Heart right ventricle (tissue), 16 donors: ENCODE measurements at regions of chr17 and their contacts with region 1.

Region 1: GRCh38 chr17:50547035-50547735 is at the start of gene SPATA20:
- DNase-seq: peak; percentile 89 to 93
- ATAC-seq: peak; percentile 85 to 93 (median 88)
- H3K4me3 ChIP-seq: peak within 1 kb of the TSS; percentile 43 to 74 (median 66)
- H3K27ac ChIP-seq: peak within 1 kb of the TSS; percentile 6 to 94 (median 82)
- H3K4me1 ChIP-seq: peaks cover 0 to 37% (median 21%) of the 10 kb centered on the region in 9 donors
- H3K27me3 ChIP-seq: no peaks in the 10 kb centered on the region
- CTCF ChIP-seq: peak; percentile 95 to 100 (median 98)
- total RNA-seq, gene SPATA20: 18.5 to 80.6 (median 63.3) TPM

Region 2: GRCh38 chr17:50583641-50584040 is 36.5 kb after region 1 on chr17:
- intact Hi-C with region 1: no loop called
- DNase-seq: peak; percentile 50 to 51
- ATAC-seq: peak; percentile 53 to 84 (median 75)
- H3K4me3 ChIP-seq: peak overlapping the region in 3 of 10 donors; percentile 6 to 15 (median 12)
- H3K27ac ChIP-seq: peak overlapping the region in 8 of 10 donors; percentile 12 to 78 (median 66)
- H3K4me1 ChIP-seq: peaks cover 3 to 24% (median 16%) of the 10 kb centered on the region in 9 donors
- H3K27me3 ChIP-seq: peaks cover 0 to 3% (median 0%) of the 10 kb centered on the region in 7 donors
- CTCF ChIP-seq: no peak

Region 3: GRCh38 chr17:50626037-50626574 is 78.9 kb after region 1 on chr17:
- intact Hi-C with region 1: loop called (anchors 1 to 5 kb)
- DNase-seq: peak; percentile 76
- ATAC-seq: peak; percentile 73 to 88 (median 84)
- H3K4me3 ChIP-seq: no peak overlapping the region
- H3K27ac ChIP-seq: no peak overlapping the region
- H3K4me1 ChIP-seq: peaks cover 0 to 9% (median 7%) of the 10 kb centered on the region in 9 donors
- H3K27me3 ChIP-seq: peaks cover 0 to 53% (median 46%) of the 10 kb centered on the region in 7 donors
- CTCF ChIP-seq: peak; percentile 67 to 88 (median 83)

Region 4: GRCh38 chr17:50681263-50682210 is 134.4 kb after region 1 on chr17:
- intact Hi-C with region 1: loop called in 8 of 10 experiments (anchors 1 to 5 kb)
- DNase-seq: peak in 1 of 2 donors; percentile 59
- ATAC-seq: peak in 6 of 8 donors; percentile 53 to 84 (median 76)
- H3K4me3 ChIP-seq: no peak overlapping the region
- H3K27ac ChIP-seq: peak overlapping the region in 1 of 10 donors; percentile 53
- H3K4me1 ChIP-seq: peaks cover 0 to 19% (median 8%) of the 10 kb centered on the region in 9 donors
- H3K27me3 ChIP-seq: no peaks in the 10 kb centered on the region
- CTCF ChIP-seq: peak; percentile 18 to 69 (median 58)

Region 5: GRCh38 chr17:50697663-50698274 is 150.6 kb after region 1 on chr17:
- intact Hi-C with region 1: loop called in 7 of 10 experiments (anchors 5 kb)
- DNase-seq: no peak
- ATAC-seq: no peak
- H3K4me3 ChIP-seq: no peak overlapping the region
- H3K27ac ChIP-seq: no peak overlapping the region
- H3K4me1 ChIP-seq: peaks cover 0 to 41% (median 24%) of the 10 kb centered on the region in 9 donors
- H3K27me3 ChIP-seq: no peaks in the 10 kb centered on the region
- CTCF ChIP-seq: peak in 1 of 9 donors; percentile 5

Region 6: DNA sequence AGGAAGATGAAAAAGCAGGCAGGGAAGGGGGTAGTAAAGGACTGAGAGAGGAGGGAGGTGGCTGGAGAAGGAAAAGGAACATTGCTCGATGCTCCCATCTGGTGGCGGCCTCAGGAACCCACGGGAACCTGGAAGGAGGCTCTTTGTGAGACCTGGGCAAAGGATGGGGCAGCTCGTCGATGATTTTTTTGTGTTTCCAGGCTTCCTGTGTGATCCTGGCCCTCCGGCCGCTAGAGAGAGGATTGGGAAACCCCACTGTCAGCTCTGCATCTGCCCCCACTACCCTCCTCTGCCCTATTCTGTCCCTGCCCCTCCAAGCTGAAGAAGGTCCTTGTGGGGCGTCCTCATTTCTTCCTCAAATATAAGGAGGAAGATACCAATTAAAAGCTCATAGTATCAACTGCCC is 294.8 kb after region 1 on chr17:
- intact Hi-C with region 1: loop called in 8 of 10 experiments (anchors 2 to 5 kb)
- DNase-seq: peak; percentile 70 to 71
- ATAC-seq: peak in 7 of 8 donors; percentile 46 to 71 (median 59)
- H3K4me3 ChIP-seq: no peak overlapping the region
- H3K27ac ChIP-seq: no peak overlapping the region
- H3K4me1 ChIP-seq: peaks cover 0 to 35% (median 3%) of the 10 kb centered on the region in 9 donors
- H3K27me3 ChIP-seq: no peaks in the 10 kb centered on the region
- CTCF ChIP-seq: peak; percentile 50 to 86 (median 83)

Region 7: DNA sequence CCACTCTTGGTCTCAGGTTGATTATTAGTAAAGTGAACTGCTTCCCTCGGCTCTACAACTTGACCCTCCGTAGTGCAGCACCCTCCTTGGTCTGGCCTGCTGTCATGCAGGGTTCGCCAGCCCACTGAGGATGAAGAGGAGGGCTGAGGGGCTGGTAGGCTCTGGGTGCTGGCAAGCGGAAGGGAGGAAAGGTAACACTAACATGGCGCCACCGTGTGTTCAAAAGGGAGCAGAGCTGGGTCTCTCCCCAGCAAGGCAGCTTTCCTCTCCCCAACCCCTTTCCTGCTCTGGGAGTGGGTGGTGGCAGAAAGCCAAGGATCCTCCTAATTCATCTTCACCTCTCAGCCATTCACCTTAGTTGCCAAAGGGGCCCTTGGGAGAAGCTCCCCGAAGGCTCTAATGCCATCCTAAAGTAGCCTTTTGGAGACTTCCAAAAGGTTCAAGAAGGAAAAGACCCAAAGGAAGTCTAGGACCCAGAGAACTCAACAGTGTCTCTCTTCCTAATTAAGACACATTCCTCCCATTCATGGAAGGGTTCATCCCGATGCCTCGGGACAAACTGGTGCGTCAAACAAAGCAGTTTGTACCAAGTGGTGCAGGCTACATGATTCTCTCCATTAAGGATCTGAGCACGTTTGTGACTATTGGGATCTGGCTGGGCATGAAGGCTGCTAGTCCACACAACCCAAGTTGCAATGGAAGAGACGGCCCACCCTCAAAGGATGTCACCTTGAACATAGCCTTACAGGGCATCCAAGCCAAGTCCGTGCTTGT is 409.8 kb after region 1 on chr17:
- intact Hi-C with region 1: loop called in 5 of 10 experiments (anchors 5 to 10 kb)
- DNase-seq: peak; percentile 66 to 67
- ATAC-seq: peak; percentile 56 to 73 (median 68)
- H3K4me3 ChIP-seq: no peak overlapping the region
- H3K27ac ChIP-seq: peak overlapping the region in 6 of 10 donors; percentile 9 to 86 (median 76)
- H3K4me1 ChIP-seq: peaks cover 3 to 41% (median 31%) of the 10 kb centered on the region in 9 donors
- H3K27me3 ChIP-seq: no peaks in the 10 kb centered on the region
- CTCF ChIP-seq: peak; percentile 44 to 80 (median 77)